HepG2 (cell line): ENCODE measurements at regions of chr7 and their contacts with region 1.

Region 1: GRCh38 chr7:73811760-73812168 is 19.0 kb upstream of the CLDN4 start:
- DNase-seq: peak; percentile 54
- ATAC-seq: peak; percentile 98
- H3K4me3 ChIP-seq: no peak overlapping the region
- H3K27ac ChIP-seq: no peak overlapping the region
- H3K4me1 ChIP-seq: no peaks in the 10 kb centered on the region
- H3K27me3 ChIP-seq: peaks cover 0 to 1% of the 10 kb centered on the region in 2 experiments; a peak in 2 of 5 replicates
- CTCF ChIP-seq: peak; percentile 92
- EP300 ChIP-seq: no peak
- POLR2A ChIP-seq: no peak
- RAD21 ChIP-seq: peak; percentile 80

Region 2: DNA sequence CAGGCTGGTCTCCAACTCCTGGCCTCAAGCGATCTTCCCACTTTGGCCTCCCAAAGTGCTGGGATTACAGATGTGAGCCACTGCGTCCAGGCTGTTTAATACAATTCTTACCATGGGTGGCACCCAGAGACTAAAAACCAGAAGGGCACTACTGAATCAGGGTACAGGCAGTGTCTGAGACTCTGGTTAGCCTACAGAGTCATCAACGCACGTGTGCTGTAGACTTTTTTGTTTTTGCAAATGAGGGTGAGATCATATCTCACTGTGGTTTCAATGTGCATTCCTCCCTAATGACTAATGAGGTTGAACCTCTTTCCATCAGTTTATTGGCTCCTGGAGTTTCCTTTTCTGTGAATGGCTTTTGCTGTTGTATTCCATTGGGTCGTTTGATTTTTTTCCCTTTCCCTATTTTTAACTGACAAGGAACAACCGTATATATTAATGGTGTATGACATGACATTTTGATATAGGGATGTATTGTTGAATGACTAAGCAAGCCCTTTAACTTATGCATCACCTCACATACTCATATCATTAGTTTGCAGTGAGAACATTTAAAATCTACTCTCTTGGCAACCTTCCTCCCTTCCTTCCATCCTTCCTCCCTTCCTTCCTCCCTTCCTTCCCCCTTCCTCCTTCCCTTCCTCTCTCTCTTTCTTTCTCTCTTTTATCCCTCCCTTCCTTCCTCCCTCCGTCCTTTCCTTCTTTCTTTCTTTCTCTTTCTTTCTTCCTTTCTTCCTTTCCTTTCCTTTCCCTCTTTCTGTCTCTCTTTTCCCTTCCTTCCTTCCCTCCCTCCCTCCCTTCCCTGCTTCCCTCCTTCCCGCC is 39.9 kb after region 1 on chr7:
- CTCF ChIA-PET with region 1: interaction called, 62 read pairs
- POLR2A ChIA-PET with region 1: no interaction called
- in situ Hi-C with region 1: loop called (anchors 5 kb)
- intact Hi-C with region 1: loop called (anchors 1 kb)
- DNase-seq: peak; percentile 52
- ATAC-seq: no peak
- H3K4me3 ChIP-seq: no peak overlapping the region
- H3K27ac ChIP-seq: no peak overlapping the region
- H3K4me1 ChIP-seq: peaks cover 6% of the 10 kb centered on the region
- H3K27me3 ChIP-seq: peaks cover 0 to 14% of the 10 kb centered on the region in 2 experiments; a peak in 1 of 5 replicates
- CTCF ChIP-seq: no peak
- EP300 ChIP-seq: no peak
- POLR2A ChIP-seq: no peak
- RAD21 ChIP-seq: no peak